Activated naive CD4-positive, alpha-beta T cell treated with anti-CD3 and anti-CD28 coated beads for 36 hours (primary cell): ENCODE measurements at regions of chr13 and their contacts with region 1.

Region 1: DNA sequence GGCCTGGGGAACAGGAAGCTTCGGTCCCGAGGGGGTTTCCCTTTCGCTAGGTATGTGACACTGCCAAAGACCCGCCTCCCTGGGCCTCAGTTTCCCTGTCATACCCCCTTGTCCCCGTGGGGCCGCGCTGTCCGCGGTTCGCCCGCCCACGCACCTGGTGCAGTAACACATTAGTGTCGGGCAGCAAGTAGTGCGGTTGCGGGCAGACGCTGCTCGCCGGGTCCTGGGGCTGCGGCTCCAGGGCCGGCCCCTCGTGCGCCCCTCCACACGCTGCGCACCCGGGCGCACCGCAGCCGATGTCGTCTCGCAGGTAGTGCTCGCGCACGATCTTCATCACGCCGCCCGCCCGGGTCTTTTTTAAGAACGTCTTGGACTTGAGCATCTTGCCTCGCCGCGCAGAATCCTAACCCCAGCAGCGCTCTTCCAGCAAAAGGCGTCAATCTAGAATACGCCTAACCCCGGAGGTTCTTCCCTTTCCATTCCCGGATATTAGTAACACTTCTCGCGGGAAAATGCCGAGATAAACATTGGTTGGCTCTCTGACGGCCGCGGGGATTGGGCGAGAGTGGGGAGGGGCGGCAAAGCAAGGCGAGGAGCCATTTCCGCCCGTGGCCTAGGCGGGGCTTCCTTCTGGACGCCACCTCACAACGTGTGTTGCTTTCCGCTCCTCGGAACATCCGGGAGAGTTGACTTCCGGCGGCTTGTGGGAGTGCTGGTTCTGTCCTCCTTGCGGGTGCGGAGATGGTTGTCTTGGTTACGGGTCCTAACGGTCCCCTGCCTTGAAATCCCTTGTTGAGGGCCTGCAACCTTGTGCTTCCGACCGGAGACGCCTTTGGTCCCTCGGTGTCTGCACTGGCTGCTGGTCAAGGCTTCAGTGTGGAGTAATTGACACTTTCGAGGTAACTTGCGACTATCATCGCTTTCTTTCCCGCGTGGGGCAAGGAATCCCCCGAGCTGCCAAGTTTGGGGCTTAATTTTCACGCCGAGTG is at the starts of genes DIS3 and PIBF1:
- DNase-seq: peak; percentile 99
- H3K4me3 Mint-ChIP-seq: peak within 1 kb of the TSS; percentile 99
- H3K27ac Mint-ChIP-seq: peak within 1 kb of the TSS; percentile 99
- H3K4me1 Mint-ChIP-seq: peaks cover 55% of the 10 kb centered on the region
- H3K27me3 Mint-ChIP-seq: no peaks in the 10 kb centered on the region
- total RNA-seq, gene DIS3: 47.7 to 48.9 TPM
- total RNA-seq, gene PIBF1: 19.5 to 23.5 TPM

Region 2: GRCh38 chr13:72599178-72599743 is 182.5 kb before region 1 on chr13:
- CTCF ChIA-PET with region 1: no interaction called
- intact Hi-C with region 1: no loop called
- DNase-seq: no peak
- H3K4me3 Mint-ChIP-seq: no peak overlapping the region
- H3K27ac Mint-ChIP-seq: no peak overlapping the region
- H3K4me1 Mint-ChIP-seq: no peaks in the 10 kb centered on the region
- H3K27me3 Mint-ChIP-seq: peaks cover 2% of the 10 kb centered on the region

Region 3: DNA sequence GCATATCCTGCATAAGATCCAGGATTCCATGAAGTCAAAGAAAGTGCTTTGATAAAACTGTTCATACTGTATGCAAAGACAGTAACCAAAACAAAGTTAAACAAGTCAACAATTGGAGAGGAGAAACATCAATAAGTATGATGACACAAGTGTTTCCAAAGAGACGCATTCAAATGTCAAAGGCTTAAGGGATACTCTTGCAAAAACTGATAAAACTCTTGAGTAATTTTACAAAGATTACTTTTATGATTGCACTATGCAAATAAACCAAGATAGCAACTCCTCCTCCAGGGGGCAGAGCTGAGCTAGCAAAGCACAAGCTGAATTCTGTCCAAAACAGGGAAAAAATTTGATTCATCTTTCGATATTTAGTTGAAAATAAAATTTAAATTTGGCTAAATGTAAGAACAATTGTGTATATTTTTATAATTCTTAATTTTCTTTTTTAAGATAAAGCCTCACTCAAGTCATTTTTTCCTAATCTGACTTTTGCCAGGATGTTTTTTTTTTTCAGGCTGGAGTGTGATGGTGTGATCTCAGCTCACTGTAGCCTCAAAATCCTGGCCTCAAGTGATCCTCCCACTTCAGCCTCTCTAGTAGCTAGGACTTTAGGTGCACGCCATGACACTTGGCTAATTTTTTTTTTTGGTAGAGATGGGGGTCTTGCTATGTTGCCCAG is 138.3 kb before region 1 on chr13:
- CTCF ChIA-PET with region 1: no interaction called
- intact Hi-C with region 1: loop called (anchors 2 kb)
- DNase-seq: peak; percentile 77
- H3K4me3 Mint-ChIP-seq: no peak overlapping the region
- H3K27ac Mint-ChIP-seq: no peak overlapping the region
- H3K4me1 Mint-ChIP-seq: no peaks in the 10 kb centered on the region
- H3K27me3 Mint-ChIP-seq: peaks cover 9% of the 10 kb centered on the region

Region 4: GRCh38 chr13:72727417-72728289 is 54.1 kb before region 1 on chr13 and contains the starts of genes BORA and MZT1:
- CTCF ChIA-PET with region 1: interaction called, 4 read pairs
- intact Hi-C with region 1: loop called (anchors 1 kb)
- DNase-seq: peak; percentile 97
- H3K4me3 Mint-ChIP-seq: peak within 1 kb of the TSS; percentile 90
- H3K27ac Mint-ChIP-seq: peak within 1 kb of the TSS; percentile 81
- H3K4me1 Mint-ChIP-seq: peaks cover 41% of the 10 kb centered on the region
- H3K27me3 Mint-ChIP-seq: no peaks in the 10 kb centered on the region
- total RNA-seq, gene BORA: 17.3 to 19.5 TPM
- total RNA-seq, gene MZT1: 32.4 to 32.9 TPM

Region 5: GRCh38 chr13:72760189-72760588 is 21.6 kb before region 1 on chr13:
- CTCF ChIA-PET with region 1: no interaction called
- intact Hi-C with region 1: loop called (anchors 2 kb)
- DNase-seq: no peak
- H3K4me3 Mint-ChIP-seq: no peak overlapping the region
- H3K27ac Mint-ChIP-seq: no peak overlapping the region
- H3K4me1 Mint-ChIP-seq: no peaks in the 10 kb centered on the region
- H3K27me3 Mint-ChIP-seq: no peaks in the 10 kb centered on the region

Region 6: DNA sequence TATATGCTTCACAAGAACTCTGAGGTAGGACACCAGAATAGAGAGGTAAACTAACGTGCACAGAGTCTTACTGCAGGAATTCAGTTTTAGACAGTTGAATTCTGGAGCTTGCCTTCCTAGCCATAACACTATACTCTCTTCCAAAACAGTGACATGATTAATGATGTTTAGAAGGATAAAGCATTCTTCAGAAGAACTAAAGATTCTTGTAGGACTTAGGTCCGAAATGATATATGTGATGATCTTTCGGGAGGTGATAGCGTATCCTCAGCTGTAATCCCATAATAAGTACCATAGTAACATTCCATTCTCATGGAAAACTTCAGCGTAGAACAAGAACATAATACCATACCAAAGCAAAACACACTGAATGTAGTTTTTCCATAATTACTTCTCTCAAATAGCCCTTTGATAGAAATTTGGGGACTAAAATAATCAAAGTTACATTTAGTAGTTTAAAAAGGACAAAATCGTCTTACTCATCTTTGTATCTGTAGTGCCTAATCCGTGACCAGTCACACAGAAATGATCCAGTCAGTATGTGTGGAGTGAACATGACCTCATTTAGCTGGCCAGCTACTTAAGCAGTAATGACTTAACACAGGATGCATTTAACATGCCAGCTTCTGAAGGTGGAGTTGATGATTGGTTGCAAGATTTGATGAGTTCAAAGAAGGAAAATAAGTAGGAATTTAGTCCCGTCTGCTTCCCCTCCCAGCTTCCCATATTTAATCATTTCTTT is 38.6 kb after region 1 on chr13:
- CTCF ChIA-PET with region 1: no interaction called
- intact Hi-C with region 1: no loop called
- DNase-seq: no peak
- H3K4me3 Mint-ChIP-seq: no peak overlapping the region
- H3K27ac Mint-ChIP-seq: no peak overlapping the region
- H3K4me1 Mint-ChIP-seq: peaks cover 2% of the 10 kb centered on the region
- H3K27me3 Mint-ChIP-seq: no peaks in the 10 kb centered on the region

Region 7: DNA sequence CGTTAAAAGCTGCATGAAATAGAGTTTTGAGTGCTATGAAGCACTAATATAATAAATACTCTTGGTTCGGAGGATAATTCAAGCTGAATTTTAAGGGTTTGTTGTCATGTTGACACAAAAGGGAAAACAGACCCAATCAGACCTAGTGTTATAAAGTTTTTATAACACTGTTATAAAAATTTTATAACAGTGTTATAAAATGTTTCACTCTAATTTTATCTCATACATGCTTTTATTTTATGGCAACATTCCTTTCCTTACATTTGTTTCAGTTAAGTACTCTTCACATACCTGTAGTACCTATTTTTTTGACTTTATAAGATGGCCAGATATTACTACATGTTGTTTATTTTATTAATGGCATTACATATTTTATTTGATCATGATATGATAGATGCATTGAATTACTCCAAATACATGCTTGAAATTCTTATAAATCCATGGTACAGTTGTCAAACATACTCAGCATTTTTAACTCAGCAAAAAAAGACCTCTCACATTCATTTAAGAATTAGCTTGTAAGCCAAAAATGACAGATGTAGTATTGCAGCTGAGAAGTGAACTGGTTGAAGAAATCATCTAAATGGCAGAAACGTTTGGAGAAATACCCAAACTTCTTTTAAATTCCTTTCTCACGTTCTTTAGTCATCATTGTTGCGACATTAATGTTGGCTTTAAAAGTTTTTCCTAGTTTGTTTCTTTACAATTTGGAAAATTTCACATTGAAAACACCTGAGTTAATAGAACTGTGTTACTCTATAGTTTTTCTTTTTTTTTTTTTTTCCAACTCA is 104.7 kb after region 1 on chr13:
- CTCF ChIA-PET with region 1: no interaction called
- intact Hi-C with region 1: no loop called
- DNase-seq: no peak
- H3K4me3 Mint-ChIP-seq: no peak overlapping the region
- H3K27ac Mint-ChIP-seq: no peak overlapping the region
- H3K4me1 Mint-ChIP-seq: peaks cover 8% of the 10 kb centered on the region
- H3K27me3 Mint-ChIP-seq: no peaks in the 10 kb centered on the region

Region 8: GRCh38 chr13:73228546-73228945 is 446.8 kb after region 1 on chr13:
- CTCF ChIA-PET with region 1: no interaction called
- intact Hi-C with region 1: loop called (anchors 2 kb)
- DNase-seq: peak; percentile 37
- H3K4me3 Mint-ChIP-seq: no peak overlapping the region
- H3K27ac Mint-ChIP-seq: peak overlapping the region; percentile 36
- H3K4me1 Mint-ChIP-seq: peaks cover 42% of the 10 kb centered on the region
- H3K27me3 Mint-ChIP-seq: no peaks in the 10 kb centered on the region

Region 9: DNA sequence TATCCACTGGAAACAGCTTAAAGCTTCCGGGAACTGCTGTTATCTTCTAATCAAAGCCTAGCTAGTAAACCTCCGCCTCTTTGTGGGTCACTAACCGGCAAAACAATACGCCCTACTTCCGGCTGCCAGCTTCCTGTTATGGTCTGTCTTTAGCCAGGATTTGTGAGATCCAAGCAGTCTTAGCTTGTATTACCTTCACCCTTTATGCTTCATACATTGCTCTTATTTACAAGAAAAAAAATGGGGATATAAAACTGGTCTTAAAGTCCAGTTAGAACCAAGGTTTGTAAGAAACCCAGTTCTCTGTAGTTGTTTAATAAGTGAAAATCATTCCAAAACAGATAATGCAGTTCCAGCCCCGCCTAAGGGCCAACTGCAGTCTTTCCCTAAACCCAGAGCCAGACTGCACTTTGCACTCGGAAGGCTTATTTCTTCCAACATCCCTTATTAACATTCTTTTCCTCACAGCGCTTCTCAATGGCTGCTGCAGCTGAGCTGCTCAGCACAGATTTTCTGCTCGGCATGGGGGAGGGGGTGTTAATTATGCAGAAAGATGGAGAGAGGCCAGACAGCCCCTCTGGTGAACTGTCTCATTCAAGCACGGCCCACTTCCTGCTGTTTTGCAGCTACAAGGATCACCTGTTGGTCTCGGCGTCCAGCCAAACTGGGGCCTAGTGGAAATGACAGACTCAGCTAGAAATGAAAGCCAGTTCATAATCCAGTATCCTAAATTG is 984.1 kb after region 1 on chr13:
- CTCF ChIA-PET with region 1: no interaction called
- intact Hi-C with region 1: loop called (anchors 2 kb)
- DNase-seq: peak; percentile 95
- H3K4me3 Mint-ChIP-seq: peak overlapping the region; percentile 70
- H3K27ac Mint-ChIP-seq: peak overlapping the region; percentile 92
- H3K4me1 Mint-ChIP-seq: peaks cover 64% of the 10 kb centered on the region
- H3K27me3 Mint-ChIP-seq: no peaks in the 10 kb centered on the region